ENCODE measurements at regions of chr5 and their contacts with region 1.

Region 1: DNA sequence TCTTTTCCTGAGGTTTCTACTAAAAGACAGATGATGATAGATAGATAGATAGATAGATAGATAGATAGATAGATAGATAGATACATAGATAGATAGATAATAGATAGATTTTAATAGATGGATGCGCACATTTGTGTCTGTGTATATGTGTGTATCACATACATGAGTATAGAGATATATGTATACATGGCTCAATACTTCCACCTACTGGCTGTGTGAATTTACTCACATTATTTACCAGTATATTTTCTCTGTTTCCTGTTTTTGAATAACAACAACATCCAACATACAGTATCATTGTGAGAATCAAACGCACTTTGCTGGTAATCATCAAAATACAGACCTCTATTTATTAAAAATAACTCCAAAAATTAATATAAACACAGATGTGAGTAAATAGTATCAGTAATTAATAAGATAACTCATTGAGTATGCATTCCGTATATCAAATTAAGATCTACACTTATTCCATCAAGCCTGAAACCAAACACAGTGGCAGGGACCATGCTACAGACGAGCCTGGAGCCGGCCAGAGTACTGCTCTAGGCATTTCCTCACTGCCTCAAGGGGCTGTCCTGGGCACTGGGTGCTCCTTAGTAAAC is 338.0 kb downstream of the SEMA5A start:
- DNase-seq: no peak
- ATAC-seq: no peak

Region 2: DNA sequence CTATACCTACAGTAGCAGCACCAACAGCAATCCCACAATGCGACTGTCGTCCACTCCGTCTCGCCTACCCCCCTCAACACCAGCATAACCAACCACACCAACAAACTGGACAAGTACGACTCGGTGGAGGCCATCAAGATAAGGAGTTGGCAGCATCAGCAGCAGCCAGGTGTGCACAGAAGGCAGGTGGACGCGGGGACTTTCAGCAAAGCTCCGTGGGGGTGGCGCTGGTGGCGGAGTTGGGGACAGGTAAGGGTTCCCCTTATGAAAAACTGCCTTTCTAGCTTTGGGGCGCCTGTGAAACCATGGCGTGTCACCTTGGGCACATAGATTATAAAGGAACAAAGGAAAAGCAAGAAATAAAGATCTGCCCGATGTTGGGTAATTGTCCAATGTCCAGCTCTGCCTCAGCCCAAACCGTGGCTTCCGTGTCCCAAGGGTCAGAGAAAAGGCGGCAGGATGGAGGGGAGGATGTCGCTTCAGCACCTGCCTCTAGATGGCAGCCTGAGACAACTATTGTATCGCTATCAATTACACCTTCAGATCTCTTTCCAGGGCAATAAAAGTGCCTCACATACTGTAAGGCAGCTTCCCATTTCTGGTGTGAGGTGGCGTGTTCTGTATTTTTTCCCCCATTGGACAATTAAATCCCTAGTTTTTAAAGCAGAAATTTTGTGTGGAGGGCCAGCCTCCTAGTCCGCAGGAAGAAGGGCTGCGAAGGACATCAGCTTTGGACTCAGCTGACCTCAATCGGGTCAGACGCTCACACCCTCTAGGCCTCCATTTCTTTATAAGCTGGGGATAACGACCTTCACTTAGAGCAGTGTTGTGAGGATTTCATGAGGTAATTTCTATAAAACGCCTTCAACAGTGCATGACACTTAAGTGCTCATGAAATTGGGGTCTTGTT is 1280.2 kb before region 1 on chr5:
- intact Hi-C with region 1: loop called (anchors 10 kb)
- DNase-seq: no peak
- ATAC-seq: peak; percentile 60

Region 3: DNA sequence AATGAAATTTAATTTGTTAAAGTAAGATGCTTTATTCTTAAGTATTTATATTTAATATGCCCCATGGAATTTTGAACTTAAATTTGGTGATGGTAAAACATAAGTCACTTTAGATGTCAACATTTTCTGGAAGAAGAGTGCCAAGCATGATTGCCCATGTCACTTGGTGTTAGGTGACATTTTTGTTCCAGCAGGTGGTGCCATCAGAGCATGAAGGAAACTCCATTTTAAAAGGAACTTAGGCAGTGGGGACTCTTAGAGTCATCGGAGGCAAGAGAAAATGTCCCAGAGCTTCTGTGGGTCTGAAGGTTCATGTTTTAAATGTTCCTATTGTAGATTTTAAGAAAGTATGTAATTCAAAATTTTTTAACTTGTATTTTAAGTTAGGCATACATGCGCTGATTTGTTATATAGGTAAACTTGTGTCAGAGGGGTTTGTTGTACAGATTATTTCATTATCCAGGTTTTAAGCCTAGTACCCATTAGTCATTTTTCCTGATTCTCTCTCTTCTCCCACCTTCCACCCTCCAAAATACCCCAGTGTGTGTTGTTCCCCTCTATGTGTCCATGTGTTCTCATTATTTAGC is 451.3 kb before region 1 on chr5:
- intact Hi-C with region 1: loop called (anchors 5 kb)
- DNase-seq: no peak
- ATAC-seq: no peak

Region 4: DNA sequence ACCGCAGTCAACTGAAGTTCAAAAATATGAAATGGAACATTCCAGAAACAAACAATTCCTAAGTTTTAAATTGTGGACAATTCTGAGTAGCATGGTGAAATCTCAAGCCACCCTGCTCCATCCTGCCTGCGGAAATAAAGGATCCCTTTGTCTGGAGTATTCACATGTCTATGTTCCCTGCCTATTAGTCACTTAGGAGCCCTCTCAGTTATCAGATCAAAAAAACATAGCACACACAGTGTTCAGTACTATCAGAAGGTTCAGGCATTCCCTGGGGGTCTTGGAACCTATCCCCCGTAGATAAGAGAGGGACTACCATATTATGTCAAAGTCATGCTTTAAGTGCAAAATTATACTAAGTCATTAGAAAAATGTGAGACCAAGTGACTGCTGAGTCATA is 37.2 kb after region 1 on chr5:
- intact Hi-C with region 1: no loop called
- DNase-seq: no peak
- ATAC-seq: no peak

Measured in Right ventricle myocardium inferior (tissue), 1 donor.